Activated naive CD4-positive, alpha-beta T cell treated with anti-CD3 and anti-CD28 coated beads, Interleukin-2, amount 10 ng/mL, durations not matched to agents 7 days and 5 days (primary cell): ENCODE measurements at regions of chr2 and their contacts with region 1.

Region 1: DNA sequence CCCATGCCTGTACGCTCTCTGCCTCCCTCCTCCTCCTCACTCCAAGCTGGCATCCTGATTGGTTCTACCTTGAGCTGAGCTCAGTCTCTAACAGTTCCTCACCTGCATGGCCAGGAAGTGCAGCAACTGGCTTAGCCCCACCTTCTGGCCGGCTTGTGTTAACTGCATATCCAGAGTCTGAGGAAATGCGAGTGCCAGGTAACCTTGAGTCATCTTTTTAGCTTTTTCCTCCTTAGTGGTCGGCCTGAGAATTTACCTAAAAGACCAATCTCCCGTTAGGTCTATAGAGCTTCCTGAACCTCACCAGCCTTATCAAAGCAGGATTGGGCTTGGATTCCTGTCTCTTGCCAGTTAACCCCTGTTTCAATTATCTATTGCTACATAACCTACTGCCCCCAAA is 89.5 kb upstream of the STK39 start:
- DNase-seq: peak; percentile 71
- H3K4me3 Mint-ChIP-seq: no peak overlapping the region
- H3K27ac Mint-ChIP-seq: no peak overlapping the region
- H3K4me1 Mint-ChIP-seq: peaks cover 3% of the 10 kb centered on the region
- H3K27me3 Mint-ChIP-seq: peaks cover 27% of the 10 kb centered on the region

Region 2: GRCh38 chr2:168136392-168136977 is 200.4 kb before region 1 on chr2:
- CTCF ChIA-PET with region 1: interaction called, 16 read pairs
- DNase-seq: no peak
- H3K4me3 Mint-ChIP-seq: no peak overlapping the region
- H3K27ac Mint-ChIP-seq: no peak overlapping the region
- H3K4me1 Mint-ChIP-seq: no peaks in the 10 kb centered on the region
- H3K27me3 Mint-ChIP-seq: no peaks in the 10 kb centered on the region

Region 3: DNA sequence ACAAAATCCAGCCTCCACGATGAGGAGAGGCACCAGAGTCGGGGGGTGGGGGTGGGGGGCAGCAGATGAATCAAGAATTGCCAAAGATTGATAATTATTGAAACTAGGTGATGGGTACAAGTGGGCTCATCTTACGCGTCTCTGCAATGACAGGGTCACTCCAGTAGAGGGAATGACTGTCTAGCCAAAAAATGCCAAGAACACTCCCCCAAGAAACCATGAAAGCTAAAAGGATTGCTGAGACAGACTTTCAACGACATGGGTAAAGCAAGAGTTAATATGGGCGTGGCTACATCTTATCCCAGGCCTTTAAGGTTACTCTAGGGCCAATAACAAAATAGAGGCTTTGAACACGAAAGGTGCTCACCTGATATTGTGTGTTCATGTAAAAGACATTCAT is 176.0 kb before region 1 on chr2:
- CTCF ChIA-PET with region 1: interaction called, 25 read pairs
- DNase-seq: peak; percentile 33
- H3K4me3 Mint-ChIP-seq: no peak overlapping the region
- H3K27ac Mint-ChIP-seq: no peak overlapping the region
- H3K4me1 Mint-ChIP-seq: peaks cover 8% of the 10 kb centered on the region
- H3K27me3 Mint-ChIP-seq: no peaks in the 10 kb centered on the region